WTC11 (cell line): ENCODE measurements at regions of chr11 and their contacts with region 1.

Region 1: DNA sequence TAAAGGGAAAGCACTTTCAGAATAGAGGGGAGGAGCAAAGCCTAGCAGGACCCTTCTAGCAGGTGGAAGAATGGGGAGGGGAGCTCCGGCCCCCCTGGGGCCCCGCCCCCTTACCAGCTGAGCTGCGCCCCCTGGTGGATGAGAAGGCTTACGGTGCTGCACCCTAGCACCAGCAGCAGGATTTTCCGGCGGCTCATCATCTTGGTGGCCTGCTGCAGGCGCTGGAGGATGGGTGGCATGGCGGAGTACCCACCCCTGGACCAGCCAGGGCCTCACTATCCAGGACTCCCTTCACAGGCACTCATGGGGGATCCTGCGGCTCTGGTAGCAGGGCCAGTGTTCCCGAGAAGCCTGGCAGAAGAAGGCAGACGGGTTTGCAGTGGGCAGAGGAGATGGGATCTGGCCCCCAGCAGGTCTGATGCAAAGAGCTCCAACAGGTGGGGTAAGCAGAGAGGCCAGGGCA is 3.8 kb downstream of the GAL3ST3 start:
- DNase-seq: peak; percentile 93
- ATAC-seq: peak; percentile 78
- H3K4me3 Mint-ChIP-seq: no peak overlapping the region
- H3K27ac Mint-ChIP-seq: no peak overlapping the region; the same call in 1 of the 2 replicates
- H3K4me1 Mint-ChIP-seq: peaks cover 29% of the 10 kb centered on the region
- H3K27me3 Mint-ChIP-seq: no peaks in the 10 kb centered on the region
- CTCF ChIP-seq: peak; percentile 98

Region 2: DNA sequence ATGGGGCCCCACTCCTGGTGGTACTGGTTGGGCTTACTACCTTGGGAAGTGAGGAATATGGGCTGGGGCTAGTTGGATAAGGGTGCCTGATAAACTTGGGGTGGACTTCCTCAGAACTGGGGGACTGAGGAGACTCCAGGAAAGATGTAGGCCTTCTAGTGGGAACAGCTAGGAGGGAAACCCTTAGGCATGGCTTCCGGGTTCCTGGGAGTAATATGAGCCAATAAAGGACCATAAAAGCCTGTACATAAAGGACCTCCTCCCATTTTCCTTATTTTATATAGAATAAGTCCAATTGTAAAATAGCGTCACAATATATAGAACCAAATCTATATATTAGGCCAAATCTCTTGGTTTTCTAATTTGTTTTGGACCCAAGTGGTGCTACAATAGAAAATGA is 306.2 kb before region 1 on chr11:
- CTCF ChIA-PET with region 1: no interaction called
- POLR2A ChIA-PET with region 1: no interaction called
- DNase-seq: no peak
- ATAC-seq: no peak
- H3K4me3 Mint-ChIP-seq: no peak overlapping the region
- H3K27ac Mint-ChIP-seq: no peak overlapping the region
- H3K4me1 Mint-ChIP-seq: no peaks in the 10 kb centered on the region
- H3K27me3 Mint-ChIP-seq: peaks cover 28% of the 10 kb centered on the region
- CTCF ChIP-seq: no peak

Region 3: DNA sequence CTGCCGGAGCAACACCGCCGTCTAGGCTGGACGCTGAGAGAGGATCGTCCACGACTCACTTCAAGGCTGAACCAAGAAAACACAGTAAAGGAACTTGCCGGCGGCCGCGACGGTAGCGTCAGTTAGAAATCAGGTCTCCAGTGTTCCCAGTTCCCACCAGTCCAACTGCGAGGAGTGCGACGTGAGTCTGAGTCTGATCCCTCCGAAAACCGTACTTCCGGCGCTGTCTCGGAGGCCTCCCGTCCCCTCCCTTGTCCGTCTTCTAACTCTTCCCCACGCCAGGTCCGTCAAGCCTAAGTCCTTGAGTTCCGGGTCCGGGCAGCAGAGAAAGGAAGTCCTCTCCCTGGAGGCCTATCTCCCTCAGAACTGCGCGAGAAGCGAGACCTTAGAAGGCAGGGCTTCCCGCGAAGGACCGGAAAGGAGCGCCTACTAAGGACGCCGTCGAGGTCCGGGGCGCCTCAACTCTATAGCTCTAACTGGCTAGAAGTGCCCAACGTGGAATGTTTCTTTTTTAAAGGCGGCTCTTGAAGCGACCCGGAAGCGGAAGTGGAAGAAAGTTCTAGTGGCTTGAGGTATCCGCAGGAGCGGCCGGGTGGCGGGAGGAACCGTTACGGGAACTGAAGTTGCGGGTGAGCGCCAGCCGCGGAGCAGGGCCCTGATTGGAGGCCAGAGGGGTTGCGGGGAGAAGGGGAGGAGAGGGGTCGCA is 43.1 kb before region 1 on chr11 and contains the starts of genes BANF1 and EIF1AD:
- CTCF ChIA-PET with region 1: interaction called, 10 read pairs
- POLR2A ChIA-PET with region 1: no interaction called
- DNase-seq: peak; percentile 92
- ATAC-seq: peak; percentile 93
- H3K4me3 Mint-ChIP-seq: peak within 1 kb of the TSS; percentile 96
- H3K27ac Mint-ChIP-seq: peak within 1 kb of the TSS; percentile 99
- H3K4me1 Mint-ChIP-seq: peaks cover 17% of the 10 kb centered on the region
- H3K27me3 Mint-ChIP-seq: no peaks in the 10 kb centered on the region
- CTCF ChIP-seq: no peak
- total RNA-seq, gene BANF1: 269 to 314 TPM (median 310 TPM) in 3 replicates
- total RNA-seq, gene EIF1AD: 29.7 to 37.6 TPM (median 32.6 TPM) in 3 replicates

Region 4: GRCh38 chr11:66011239-66011784 is 33.9 kb before region 1 on chr11:
- CTCF ChIA-PET with region 1: interaction called, 17 read pairs
- POLR2A ChIA-PET with region 1: no interaction called
- DNase-seq: no peak
- ATAC-seq: no peak
- H3K4me3 Mint-ChIP-seq: peak overlapping the region; percentile 30; the same call in 1 of the 2 replicates
- H3K27ac Mint-ChIP-seq: no peak overlapping the region
- H3K4me1 Mint-ChIP-seq: peaks cover 8% of the 10 kb centered on the region; the same call in 1 of the 2 replicates
- H3K27me3 Mint-ChIP-seq: peaks cover 22% of the 10 kb centered on the region
- CTCF ChIP-seq: no peak

Region 5: GRCh38 chr11:66022401-66023185 is 22.6 kb before region 1 on chr11:
- CTCF ChIA-PET with region 1: interaction called, 48 read pairs
- POLR2A ChIA-PET with region 1: no interaction called
- DNase-seq: peak; percentile 92
- ATAC-seq: peak; percentile 96
- H3K4me3 Mint-ChIP-seq: peak overlapping the region; percentile 50
- H3K27ac Mint-ChIP-seq: no peak overlapping the region; the same call in 1 of the 2 replicates
- H3K4me1 Mint-ChIP-seq: no peaks in the 10 kb centered on the region
- H3K27me3 Mint-ChIP-seq: peaks cover 29% of the 10 kb centered on the region
- CTCF ChIP-seq: peak; percentile 95

Region 6: GRCh38 chr11:66059966-66060680 is 14.9 kb after region 1 on chr11:
- CTCF ChIA-PET with region 1: interaction called, 11 read pairs
- POLR2A ChIA-PET with region 1: no interaction called
- DNase-seq: no peak
- ATAC-seq: no peak
- H3K4me3 Mint-ChIP-seq: no peak overlapping the region
- H3K27ac Mint-ChIP-seq: no peak overlapping the region
- H3K4me1 Mint-ChIP-seq: no peaks in the 10 kb centered on the region
- H3K27me3 Mint-ChIP-seq: no peaks in the 10 kb centered on the region
- CTCF ChIP-seq: no peak

Region 7: GRCh38 chr11:66069715-66070603 is 24.8 kb after region 1 on chr11 and contains the start of gene PACS1:
- CTCF ChIA-PET with region 1: interaction called, 35 read pairs
- POLR2A ChIA-PET with region 1: no interaction called
- DNase-seq: peak; percentile 73
- ATAC-seq: peak; percentile 57
- H3K4me3 Mint-ChIP-seq: peak within 1 kb of the TSS; percentile 88
- H3K27ac Mint-ChIP-seq: peak within 1 kb of the TSS; percentile 93
- H3K4me1 Mint-ChIP-seq: peaks cover 26% of the 10 kb centered on the region
- H3K27me3 Mint-ChIP-seq: no peaks in the 10 kb centered on the region
- CTCF ChIP-seq: no peak
- total RNA-seq, gene PACS1: 30.1 to 34.8 TPM (median 30.9 TPM) in 3 replicates

Region 8: DNA sequence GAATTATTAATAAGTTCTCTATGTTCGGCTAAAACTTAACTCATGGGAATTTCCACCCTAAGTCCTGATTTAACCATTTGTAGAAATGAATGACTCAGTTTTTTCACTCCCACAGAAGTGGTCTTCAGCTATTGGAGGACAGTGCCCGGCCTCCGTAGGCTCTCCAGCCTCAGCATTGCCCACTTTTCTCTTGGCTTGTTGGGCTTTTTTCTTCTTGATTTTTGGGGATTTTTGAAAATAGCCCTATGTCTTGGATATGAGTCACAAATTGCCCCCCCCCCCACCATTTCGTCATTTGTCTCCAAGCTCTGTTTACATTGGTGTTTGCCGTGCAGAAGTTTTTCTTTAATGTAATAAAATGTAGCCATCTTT is 91.5 kb after region 1 on chr11:
- CTCF ChIA-PET with region 1: interaction called, 14 read pairs
- POLR2A ChIA-PET with region 1: no interaction called
- DNase-seq: no peak
- ATAC-seq: no peak
- H3K4me3 Mint-ChIP-seq: no peak overlapping the region
- H3K27ac Mint-ChIP-seq: no peak overlapping the region
- H3K4me1 Mint-ChIP-seq: peaks cover 12% of the 10 kb centered on the region
- H3K27me3 Mint-ChIP-seq: no peaks in the 10 kb centered on the region
- CTCF ChIP-seq: no peak